Dendritic cell treated with granulocyte-macrophage colony-stimulating factor and Interleukin-4, amounts not matched to agents 40 ng/mL and 50 ng/mL, for 4 days (primary cell): ENCODE measurements at regions of chr12 and their contacts with region 1.

Region 1: DNA sequence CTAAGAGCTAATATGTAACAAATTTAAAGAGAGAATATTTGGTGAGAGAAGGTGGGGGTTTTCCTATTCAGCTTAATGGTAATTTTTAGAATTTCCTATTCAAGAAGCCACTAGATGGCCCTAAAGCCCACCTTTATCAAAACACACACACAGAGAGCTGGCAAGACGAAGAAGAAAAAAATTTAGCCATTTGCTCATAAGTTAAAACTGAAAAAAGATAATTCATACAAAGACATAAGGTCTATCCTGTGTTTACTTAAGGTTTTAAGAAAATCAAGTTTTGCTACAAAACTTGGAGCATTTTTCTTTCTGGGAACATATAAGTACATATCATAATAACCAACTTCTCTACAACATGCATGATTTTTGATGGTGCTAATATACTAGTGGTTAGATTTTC is 46.8 kb upstream of the PCED1B start:
- H3K4me3 Mint-ChIP-seq: no peak overlapping the region
- H3K27ac Mint-ChIP-seq: no peak overlapping the region
- H3K4me1 Mint-ChIP-seq: peaks cover 10% of the 10 kb centered on the region
- H3K27me3 Mint-ChIP-seq: peaks cover 2% of the 10 kb centered on the region

Region 2: GRCh38 chr12:47048541-47048940 is 15.9 kb after region 1 on chr12:
- intact Hi-C with region 1: no loop called
- H3K4me3 Mint-ChIP-seq: no peak overlapping the region
- H3K27ac Mint-ChIP-seq: no peak overlapping the region
- H3K4me1 Mint-ChIP-seq: peaks cover 7% of the 10 kb centered on the region
- H3K27me3 Mint-ChIP-seq: no peaks in the 10 kb centered on the region

Region 3: GRCh38 chr12:47071241-47071852 is 38.7 kb after region 1 on chr12:
- intact Hi-C with region 1: loop called (anchors 2 kb)
- H3K4me3 Mint-ChIP-seq: no peak overlapping the region
- H3K27ac Mint-ChIP-seq: no peak overlapping the region
- H3K4me1 Mint-ChIP-seq: no peaks in the 10 kb centered on the region
- H3K27me3 Mint-ChIP-seq: peaks cover 4% of the 10 kb centered on the region

Region 4: DNA sequence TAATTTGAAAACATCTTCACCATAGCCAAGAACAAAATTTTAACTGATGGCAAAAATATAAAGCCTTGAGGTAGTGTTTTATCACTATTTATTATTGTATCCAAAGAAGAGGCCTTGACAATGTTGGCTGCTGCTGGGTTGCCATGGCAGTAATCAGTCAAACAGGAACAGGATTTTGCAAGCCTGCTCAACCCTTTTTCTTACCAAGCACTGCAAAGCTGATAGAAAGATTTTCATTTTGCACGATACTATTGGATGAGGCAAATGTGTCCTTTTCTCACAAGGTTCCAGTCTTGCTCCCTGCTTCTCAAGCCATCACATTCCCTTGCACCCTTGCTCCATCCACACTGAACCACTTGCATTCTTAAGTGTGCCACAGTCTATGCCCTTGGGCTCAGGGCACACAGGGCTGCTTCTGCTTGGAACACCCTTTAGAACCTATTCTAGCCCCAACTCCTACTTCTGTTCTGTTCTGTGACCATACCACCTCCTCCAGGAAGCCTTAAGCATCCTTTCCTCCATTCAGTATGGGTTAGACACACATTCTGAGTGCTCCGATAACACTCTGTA is 123.6 kb after region 1 on chr12:
- intact Hi-C with region 1: no loop called
- H3K4me3 Mint-ChIP-seq: no peak overlapping the region
- H3K27ac Mint-ChIP-seq: no peak overlapping the region
- H3K4me1 Mint-ChIP-seq: peaks cover 14% of the 10 kb centered on the region
- H3K27me3 Mint-ChIP-seq: no peaks in the 10 kb centered on the region

Region 5: DNA sequence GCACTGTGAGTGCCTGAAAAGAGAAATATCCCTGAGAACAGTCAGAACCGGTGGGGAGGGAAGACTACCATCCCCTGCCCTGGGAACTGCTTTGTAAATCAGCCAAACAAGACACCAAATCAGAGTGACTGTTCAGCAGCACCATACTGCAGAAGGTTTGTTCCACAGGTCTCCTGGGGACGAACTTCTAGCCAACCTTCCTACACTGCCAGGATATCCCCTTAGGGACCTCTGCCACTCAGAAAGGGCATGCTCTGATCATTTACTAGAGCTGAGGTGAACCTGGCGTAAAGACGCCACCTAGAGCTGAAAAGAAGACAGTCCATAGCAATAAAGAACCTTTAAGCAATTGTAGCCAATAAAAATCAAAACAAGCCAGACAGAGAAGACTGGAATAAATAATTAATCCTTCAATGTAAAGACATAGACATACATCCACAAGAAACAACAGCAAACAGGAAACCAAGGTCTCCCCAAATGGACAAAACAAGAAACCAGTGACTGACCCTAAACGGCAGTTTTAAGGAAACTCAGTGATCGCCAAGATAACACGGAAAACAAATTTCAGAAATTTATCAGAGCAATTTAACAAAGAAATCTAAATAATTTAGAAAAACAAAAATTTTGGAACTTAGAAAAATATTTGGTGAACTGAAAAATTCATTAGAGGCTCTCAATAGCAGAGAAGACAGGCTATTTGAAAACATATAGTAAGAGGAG is 275.2 kb after region 1 on chr12:
- intact Hi-C with region 1: loop called (anchors 5 kb)
- H3K4me3 Mint-ChIP-seq: peak overlapping the region; percentile 75
- H3K27ac Mint-ChIP-seq: peak overlapping the region; percentile 80
- H3K4me1 Mint-ChIP-seq: peaks cover 29% of the 10 kb centered on the region
- H3K27me3 Mint-ChIP-seq: peaks cover 11% of the 10 kb centered on the region

Region 6: GRCh38 chr12:47397664-47398281 is 365.1 kb after region 1 on chr12:
- intact Hi-C with region 1: loop called (anchors 2 kb)
- H3K4me3 Mint-ChIP-seq: no peak overlapping the region
- H3K27ac Mint-ChIP-seq: peak overlapping the region; percentile 15
- H3K4me1 Mint-ChIP-seq: peaks cover 55% of the 10 kb centered on the region
- H3K27me3 Mint-ChIP-seq: no peaks in the 10 kb centered on the region

Region 7: GRCh38 chr12:47636908-47637780 is 604.5 kb after region 1 on chr12:
- intact Hi-C with region 1: loop called (anchors 1 kb)
- H3K4me3 Mint-ChIP-seq: no peak overlapping the region
- H3K27ac Mint-ChIP-seq: no peak overlapping the region
- H3K4me1 Mint-ChIP-seq: no peaks in the 10 kb centered on the region
- H3K27me3 Mint-ChIP-seq: no peaks in the 10 kb centered on the region

Region 8: DNA sequence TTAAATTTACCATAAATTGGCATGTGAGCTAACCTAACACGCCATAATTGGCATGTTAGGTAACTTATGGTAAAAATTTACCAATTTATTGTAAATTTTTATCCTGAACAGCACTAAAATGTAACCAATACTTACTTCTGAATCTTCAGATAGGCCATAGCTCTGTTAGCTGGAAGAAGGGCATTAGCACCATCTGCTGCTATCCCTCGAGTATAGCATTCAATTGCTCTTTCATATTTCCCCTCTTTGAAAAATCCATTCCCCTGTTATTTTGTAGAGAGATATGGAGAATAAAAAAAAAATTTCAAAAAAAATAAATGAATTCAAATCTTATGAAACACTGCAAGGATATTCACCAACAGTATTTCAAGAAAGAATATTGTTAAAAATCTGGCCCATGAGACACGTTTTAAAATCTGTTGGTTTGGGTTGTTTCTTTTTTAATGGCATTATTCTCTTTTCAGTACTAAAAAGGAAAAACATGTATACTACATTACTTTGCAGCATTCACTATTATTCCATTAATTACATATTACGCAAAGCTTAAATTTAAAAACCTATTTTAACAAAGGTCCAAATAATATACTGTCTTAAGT is 654.1 kb after region 1 on chr12:
- intact Hi-C with region 1: loop called (anchors 5 kb)
- H3K4me3 Mint-ChIP-seq: no peak overlapping the region
- H3K27ac Mint-ChIP-seq: no peak overlapping the region
- H3K4me1 Mint-ChIP-seq: no peaks in the 10 kb centered on the region
- H3K27me3 Mint-ChIP-seq: no peaks in the 10 kb centered on the region